Esophagus muscularis mucosa (tissue), 4 donors: ENCODE measurements at regions of chr2 and their contacts with region 1.

Region 1: DNA sequence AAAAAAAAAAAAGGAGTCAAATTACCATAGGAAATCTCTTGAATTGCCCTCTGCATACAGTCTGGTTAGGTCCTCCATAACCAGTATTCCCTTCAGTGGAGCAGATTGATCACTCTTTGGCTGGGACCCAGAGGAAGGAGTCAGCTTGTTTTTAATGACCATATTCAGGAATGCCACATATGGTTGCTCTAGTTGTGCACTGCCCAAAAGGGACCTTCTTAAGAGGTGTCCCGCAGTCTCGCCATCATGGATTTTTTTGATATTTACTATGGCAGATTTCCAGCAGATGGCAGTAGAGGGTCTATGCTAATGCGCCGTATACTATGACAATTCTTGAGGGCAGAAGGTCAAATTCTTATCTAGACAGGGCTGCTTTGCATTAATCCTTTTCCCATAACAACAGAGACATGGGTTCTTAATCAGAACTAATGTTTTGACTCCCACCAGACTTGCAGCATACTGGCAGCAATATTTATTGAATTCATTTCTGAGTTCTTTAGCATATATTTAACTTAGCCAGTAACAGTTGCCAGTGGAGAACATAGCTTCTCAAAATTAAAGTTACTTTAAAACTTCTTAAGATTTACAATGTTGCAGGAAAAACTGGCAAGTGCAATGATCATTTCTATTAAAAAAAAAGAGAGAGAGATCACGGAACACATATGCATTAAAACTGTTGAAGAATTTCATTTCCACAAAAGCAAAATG is 31.8 kb upstream of the INPP4A start:
- DNase-seq: no peak
- H3K4me3 ChIP-seq: no peak overlapping the region
- H3K27ac ChIP-seq: no peak overlapping the region
- H3K4me1 ChIP-seq: peaks cover 3 to 8% (median 6%) of the 10 kb centered on the region in 4 donors
- H3K27me3 ChIP-seq: no peaks in the 10 kb centered on the region
- CTCF ChIP-seq: peak; percentile 66 to 74 (median 71)
- EP300 ChIP-seq: no peak
- POLR2A ChIP-seq: no peak

Region 2: GRCh38 chr2:98346311-98347236 is 66.3 kb before region 1 on chr2 and contains the start of gene CNGA3:
- intact Hi-C with region 1: no loop called
- DNase-seq: peak; percentile 70
- H3K4me3 ChIP-seq: peak within 1 kb of the TSS; percentile 36 to 50 (median 40)
- H3K27ac ChIP-seq: peak within 1 kb of the TSS in 1 of 4 donors; percentile 4
- H3K4me1 ChIP-seq: peaks cover 9 to 25% (median 17%) of the 10 kb centered on the region in 4 donors
- H3K27me3 ChIP-seq: peaks cover 13 to 63% (median 27%) of the 10 kb centered on the region in 4 donors
- CTCF ChIP-seq: peak in 1 of 3 experiments; percentile 11
- EP300 ChIP-seq: no peak
- POLR2A ChIP-seq: no peak
- total RNA-seq, gene CNGA3: 2.5 to 13.7 (median 6.6) TPM

Region 3: DNA sequence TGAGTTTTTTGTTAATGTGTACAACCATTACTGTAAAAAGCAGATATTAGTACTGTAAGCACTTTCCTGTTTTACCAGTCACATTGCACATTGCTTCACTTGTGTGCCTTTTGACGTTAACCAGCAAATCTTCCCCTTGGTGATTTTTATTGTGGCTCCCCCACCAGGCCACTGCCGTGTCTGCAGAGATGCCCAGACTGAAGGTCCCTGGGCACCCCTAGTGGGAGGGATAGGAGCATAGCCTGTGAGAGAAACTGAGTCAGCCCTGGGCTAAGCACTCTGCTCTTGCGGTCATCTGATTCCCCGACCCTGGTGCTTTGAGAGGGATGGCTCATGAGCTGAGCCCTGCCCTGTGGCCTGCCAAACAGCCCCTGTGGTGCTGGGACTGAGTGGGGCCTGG is 105.2 kb after region 1 on chr2:
- intact Hi-C with region 1: loop called (anchors 5 kb)
- DNase-seq: peak; percentile 89
- H3K4me3 ChIP-seq: no peak overlapping the region
- H3K27ac ChIP-seq: no peak overlapping the region
- H3K4me1 ChIP-seq: peaks cover 30 to 71% (median 60%) of the 10 kb centered on the region in 4 donors
- H3K27me3 ChIP-seq: no peaks in the 10 kb centered on the region
- CTCF ChIP-seq: peak; percentile 22 to 54 (median 47)
- EP300 ChIP-seq: no peak
- POLR2A ChIP-seq: no peak

Region 4: DNA sequence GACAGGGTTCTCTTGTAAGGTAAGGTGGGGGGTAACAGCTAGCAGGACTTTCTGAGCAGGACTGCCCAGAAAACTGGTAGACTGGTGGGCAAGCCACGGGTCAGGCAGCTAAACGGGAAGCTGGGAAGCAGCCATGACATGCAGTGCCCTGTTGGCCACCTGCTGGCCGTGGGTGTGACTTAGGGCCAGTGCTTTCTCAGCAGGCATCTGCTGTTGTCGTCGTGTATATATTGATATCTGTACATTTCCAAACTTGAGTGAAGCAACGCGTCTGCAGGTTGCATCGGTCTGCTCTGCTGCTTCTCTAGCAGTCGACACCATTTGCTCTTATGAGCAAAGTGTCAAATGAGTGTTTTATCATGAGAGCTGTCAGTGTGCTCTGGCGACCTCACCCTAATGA is 164.4 kb after region 1 on chr2:
- intact Hi-C with region 1: loop called (anchors 10 kb)
- DNase-seq: no peak
- H3K4me3 ChIP-seq: no peak overlapping the region
- H3K27ac ChIP-seq: no peak overlapping the region
- H3K4me1 ChIP-seq: peaks cover 0 to 9% (median 4%) of the 10 kb centered on the region in 4 donors
- H3K27me3 ChIP-seq: no peaks in the 10 kb centered on the region
- CTCF ChIP-seq: peak in 1 of 3 experiments; percentile 14
- EP300 ChIP-seq: no peak
- POLR2A ChIP-seq: no peak

Region 5: DNA sequence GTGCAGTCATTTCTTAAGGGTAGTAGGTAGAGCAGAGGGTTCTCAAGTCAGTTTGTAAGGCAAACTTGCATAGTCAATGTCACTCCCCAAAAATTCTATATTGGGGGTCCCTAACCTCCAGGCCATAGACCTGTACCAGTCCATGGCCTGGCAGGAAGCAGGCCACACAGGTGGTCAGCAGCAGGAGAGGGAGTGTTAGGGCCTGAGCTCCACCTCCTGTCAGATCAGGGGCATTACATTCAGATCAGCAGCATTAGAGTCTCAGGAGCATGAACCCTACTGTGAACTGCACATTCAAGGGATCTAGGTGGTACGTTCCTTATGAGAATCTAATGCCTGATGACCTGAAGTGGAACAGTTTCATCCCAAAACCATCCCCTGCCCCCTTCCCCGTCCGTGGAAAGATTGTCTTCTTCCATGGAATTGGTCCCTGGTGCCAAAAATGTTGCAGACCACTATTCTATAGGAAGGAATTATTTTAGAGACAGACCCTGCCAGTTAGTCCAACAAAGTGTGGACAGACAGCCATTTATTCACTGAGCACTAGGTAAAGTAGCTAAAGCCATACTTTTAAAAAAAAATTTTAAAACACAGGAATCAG is 188.7 kb after region 1 on chr2:
- intact Hi-C with region 1: loop called (anchors 5 kb)
- DNase-seq: peak; percentile 78
- H3K4me3 ChIP-seq: no peak overlapping the region
- H3K27ac ChIP-seq: no peak overlapping the region
- H3K4me1 ChIP-seq: peaks cover 11 to 23% (median 17%) of the 10 kb centered on the region in 4 donors
- H3K27me3 ChIP-seq: no peaks in the 10 kb centered on the region
- CTCF ChIP-seq: peak; percentile 44 to 60 (median 46)
- EP300 ChIP-seq: no peak
- POLR2A ChIP-seq: no peak